ENCODE measurements at regions of chr5 and their contacts with region 1.

Region 1: DNA sequence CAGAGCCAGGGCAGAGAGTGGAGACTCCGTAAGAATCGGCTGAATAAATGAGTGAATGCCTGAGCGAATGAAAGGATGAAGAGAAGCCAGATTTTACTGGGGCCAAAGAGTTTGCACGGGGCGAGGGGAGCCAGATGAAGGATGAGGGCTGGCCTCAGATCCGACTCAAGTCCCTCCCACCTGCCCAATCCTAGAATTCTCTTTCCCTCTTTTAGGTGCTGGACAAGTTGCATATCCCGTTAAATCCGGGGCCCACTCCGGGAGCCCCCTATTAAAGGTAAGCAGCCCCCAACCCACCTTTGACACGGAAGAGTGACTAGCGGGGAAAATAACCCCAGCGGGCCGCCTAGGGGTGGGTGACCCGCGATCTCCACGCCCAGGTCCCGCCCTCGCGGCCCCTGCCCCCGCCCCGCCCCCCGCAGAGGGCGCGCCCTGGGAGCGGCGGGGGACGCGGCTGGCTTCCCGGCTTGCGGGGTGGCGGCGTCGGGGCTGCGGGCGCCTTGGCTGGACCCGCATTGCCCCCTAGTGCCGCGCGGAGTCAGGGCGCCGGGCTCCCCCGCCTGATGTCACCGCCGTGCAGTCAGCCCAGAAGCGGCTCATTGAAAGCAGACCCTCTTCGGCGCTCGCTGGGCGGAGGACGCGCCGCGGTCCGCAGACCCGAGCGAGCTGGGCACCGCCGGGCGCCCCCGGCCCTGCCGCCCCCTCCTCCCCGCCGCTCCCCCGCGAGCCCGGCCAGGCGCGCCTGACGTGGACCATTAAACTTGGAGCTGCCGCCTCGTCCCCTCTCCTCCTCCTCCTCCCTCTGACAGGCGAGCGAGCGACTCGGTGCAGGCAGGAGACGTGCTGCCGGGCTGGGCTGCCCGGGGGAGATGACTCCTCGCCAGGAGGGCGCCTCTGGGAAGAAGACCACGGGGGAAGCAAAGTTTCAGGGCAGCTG is at the start of gene ADRA1B:
- DNase-seq: peak; percentile 41
- H3K4me3 ChIP-seq: peak within 1 kb of the TSS; percentile 12 to 41 (median 33)
- H3K27ac ChIP-seq: no peak within 1 kb of the TSS
- H3K4me1 ChIP-seq: peaks cover 49% of the 10 kb centered on the region
- H3K27me3 ChIP-seq: no peaks in the 10 kb centered on the region
- CTCF ChIP-seq: peak; percentile 36 to 65
- total RNA-seq, gene ADRA1B: 0.67 to 0.80 TPM

Region 2: DNA sequence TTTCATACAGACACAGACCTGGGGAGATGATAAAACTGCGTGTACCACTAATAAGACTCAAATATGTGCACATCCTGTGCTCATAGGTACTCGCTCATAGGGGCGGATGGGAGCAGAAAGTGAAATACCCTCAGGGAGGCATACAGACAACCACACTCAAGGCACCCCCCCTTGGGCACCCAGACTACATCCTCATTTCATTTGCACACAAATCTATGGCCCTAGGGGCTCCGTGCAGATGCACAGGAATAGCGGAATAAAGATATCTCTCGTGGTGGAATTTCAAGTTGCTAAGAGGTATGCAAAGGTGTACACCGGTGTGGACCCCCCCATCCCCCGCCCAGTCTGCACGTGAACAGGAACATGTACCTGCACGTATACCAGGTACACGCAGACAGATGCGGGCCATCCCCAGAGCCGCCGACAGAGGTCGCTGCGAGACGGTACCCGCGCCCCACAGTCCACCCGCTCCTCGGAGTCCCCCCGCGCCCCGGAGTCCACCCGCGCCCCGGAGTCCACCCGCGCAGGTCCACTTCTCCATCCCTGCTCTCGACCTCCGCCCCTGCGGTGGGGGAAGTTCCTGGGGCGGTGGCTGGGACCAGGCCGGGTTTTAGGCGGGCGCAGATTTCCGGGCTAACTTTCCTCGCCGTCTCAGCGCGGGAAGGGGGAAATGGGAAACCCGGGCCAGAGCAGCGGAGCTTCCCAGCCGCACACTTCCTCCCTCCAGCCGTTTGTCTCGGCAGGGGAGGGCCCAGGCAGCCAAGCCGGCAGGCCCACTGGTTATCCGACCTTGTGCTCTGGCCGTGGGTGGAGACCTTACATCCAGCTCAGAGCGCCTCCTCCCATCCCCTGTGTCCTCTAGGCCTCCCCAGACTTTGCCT is 584.8 kb before region 1 on chr5:
- CTCF ChIA-PET with region 1: no interaction called
- dilution Hi-C with region 1: no loop called
- in situ Hi-C with region 1: no loop called
- intact Hi-C with region 1: loop called (anchors 2 kb)
- DNase-seq: no peak
- H3K4me3 ChIP-seq: peak overlapping the region; percentile 37 to 56 (median 45)
- H3K27ac ChIP-seq: no peak overlapping the region
- H3K4me1 ChIP-seq: peaks cover 9% of the 10 kb centered on the region
- H3K27me3 ChIP-seq: no peaks in the 10 kb centered on the region
- CTCF ChIP-seq: peak; percentile 56 to 83

Region 3: GRCh38 chr5:159456722-159457465 is 459.3 kb before region 1 on chr5:
- CTCF ChIA-PET with region 1: no interaction called
- dilution Hi-C with region 1: no loop called
- in situ Hi-C with region 1: loop called in 1 of 2 experiments (anchors 10 kb)
- intact Hi-C with region 1: no loop called
- DNase-seq: peak; percentile 77
- H3K4me3 ChIP-seq: no peak overlapping the region
- H3K27ac ChIP-seq: no peak overlapping the region
- H3K4me1 ChIP-seq: peaks cover 6% of the 10 kb centered on the region
- H3K27me3 ChIP-seq: no peaks in the 10 kb centered on the region
- CTCF ChIP-seq: no peak

Region 4: DNA sequence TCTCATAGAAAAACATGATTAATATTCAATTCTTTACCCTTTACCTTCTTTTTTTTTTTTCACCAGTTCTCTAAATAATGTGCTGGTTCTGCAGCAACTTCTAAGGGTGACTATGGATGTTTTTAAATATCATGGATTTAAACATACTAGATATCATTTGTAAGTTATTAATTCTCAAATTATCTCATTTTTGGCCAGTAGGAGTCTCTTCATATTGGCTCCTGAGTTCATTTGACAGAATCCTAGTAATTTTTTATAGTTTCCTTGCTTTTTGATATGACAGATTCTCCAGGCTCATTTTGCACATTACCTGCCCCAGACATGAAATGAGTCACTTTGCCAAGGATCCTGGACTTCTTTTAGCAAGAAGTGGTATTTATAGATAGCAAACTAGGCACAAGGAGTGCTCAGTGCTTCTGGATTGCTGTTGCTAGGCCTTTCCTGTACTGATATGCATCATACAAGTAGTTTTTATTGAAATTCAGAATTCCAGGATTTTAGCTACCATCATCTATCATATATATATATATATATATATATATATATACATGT is 384.5 kb before region 1 on chr5:
- CTCF ChIA-PET with region 1: no interaction called
- dilution Hi-C with region 1: no loop called
- in situ Hi-C with region 1: no loop called
- intact Hi-C with region 1: loop called (anchors 1 kb)
- DNase-seq: no peak
- H3K4me3 ChIP-seq: no peak overlapping the region
- H3K27ac ChIP-seq: no peak overlapping the region
- H3K4me1 ChIP-seq: no peaks in the 10 kb centered on the region
- H3K27me3 ChIP-seq: no peaks in the 10 kb centered on the region
- CTCF ChIP-seq: peak; percentile 10 to 30

Region 5: DNA sequence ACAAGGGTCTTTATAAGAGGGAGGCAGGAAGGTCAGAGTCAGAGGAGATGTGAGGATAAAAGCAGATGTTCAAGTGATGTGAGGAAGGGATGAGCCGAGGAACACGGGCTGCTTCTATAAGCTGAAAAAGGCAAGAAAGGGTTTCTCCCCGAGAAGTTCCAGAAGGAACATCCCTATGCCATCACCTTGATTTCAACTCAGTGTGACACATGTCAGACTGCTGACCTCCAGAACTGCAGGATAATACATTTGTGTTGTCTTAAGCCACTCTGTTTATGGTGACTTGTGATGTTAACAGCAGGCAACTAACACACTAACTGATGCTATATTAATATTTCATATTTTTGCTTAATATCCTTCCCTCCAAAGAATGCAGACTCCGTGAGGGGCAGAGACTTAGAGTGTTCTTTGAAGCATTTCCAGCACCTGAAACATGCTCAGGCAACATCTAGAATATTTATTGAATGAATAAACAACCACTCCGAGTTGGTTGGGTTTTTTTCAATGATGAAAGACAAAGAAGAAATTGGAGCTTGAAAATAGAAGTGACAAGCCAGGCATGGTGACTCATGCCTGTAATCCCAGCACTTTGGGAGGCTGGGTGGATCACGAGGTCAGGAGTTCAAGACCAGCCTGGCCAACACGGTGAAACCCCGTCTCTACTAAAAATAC is 77.5 kb before region 1 on chr5:
- CTCF ChIA-PET with region 1: no interaction called
- dilution Hi-C with region 1: no loop called
- in situ Hi-C with region 1: no loop called
- intact Hi-C with region 1: loop called (anchors 2 kb)
- DNase-seq: peak; percentile 89
- H3K4me3 ChIP-seq: no peak overlapping the region
- H3K27ac ChIP-seq: peak overlapping the region; percentile 34
- H3K4me1 ChIP-seq: peaks cover 30% of the 10 kb centered on the region
- H3K27me3 ChIP-seq: no peaks in the 10 kb centered on the region
- CTCF ChIP-seq: no peak

Region 6: DNA sequence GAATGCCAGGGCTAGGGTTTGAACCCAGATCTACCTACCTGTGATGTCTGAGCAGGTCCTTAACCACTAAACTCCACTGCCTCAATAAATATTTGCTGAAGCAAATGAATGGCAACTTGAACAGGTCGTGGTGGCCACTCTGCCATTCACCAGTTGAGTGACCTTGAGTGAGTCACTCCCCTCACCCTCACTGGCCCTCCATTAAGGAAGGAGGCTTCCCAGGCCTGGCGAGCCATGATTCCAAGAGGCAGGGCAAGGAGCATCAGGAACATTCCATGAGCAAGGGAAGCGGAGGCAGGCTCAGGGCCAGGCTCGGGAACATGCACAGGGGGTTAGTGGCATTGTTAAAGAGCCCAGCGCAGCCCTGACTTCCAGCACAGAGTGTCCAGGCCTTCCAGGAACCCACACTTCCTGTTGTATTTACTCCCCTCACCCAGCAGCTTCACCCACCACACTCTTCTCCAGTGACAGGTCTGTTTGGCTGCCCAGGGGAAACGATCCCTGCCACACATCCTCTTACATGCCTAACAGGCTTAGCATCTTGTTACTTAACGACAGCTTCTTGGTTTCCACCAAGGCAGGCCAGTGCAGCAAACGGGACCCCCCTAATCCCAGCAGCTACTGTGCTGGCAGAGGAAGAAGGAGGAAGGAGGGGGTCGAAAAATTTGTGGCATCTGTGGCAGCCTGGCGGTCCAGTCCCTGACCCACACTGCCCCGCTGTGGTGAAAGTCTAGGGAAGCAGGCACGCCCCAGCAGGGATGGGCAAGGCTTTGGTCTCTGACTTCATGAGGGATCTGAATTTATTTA is 49.1 kb after region 1 on chr5:
- CTCF ChIA-PET with region 1: no interaction called
- dilution Hi-C with region 1: no loop called
- in situ Hi-C with region 1: no loop called
- intact Hi-C with region 1: no loop called
- DNase-seq: peak; percentile 29
- H3K4me3 ChIP-seq: no peak overlapping the region
- H3K27ac ChIP-seq: no peak overlapping the region
- H3K4me1 ChIP-seq: no peaks in the 10 kb centered on the region
- H3K27me3 ChIP-seq: no peaks in the 10 kb centered on the region
- CTCF ChIP-seq: peak; percentile 64 to 78